ENCODE measurements at regions of chr7 and their contacts with region 1.

Region 1: DNA sequence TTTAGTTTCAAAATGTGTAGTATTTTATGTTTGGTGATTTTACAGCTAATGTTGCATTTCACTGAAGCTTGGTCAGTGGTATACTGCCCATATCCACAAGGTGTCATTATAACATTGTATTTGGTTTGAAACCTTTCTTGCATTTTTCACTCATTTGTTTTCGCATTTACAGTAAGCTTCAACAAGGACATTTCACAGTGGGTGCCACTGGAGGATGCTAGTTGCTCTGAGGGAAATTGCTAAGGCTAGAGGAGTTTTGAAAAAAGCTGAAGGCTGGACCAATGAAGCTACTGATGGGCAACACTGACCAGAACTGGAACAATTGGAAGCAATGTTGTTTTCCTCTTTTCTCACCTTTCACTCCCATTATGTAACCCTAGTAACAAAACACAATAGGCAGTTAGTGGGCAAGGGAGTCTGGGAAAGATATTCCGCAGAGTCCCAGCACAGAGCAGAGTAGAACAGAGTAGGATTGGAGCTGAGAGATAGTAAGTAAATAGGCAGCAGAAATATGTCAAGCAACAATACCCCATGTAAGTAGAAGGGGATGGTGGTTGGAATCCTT is 23.6 kb upstream of the SRI start:
- DNase-seq: peak; percentile 25 to 56
- ATAC-seq: peak; percentile 89 to 90
- H3K4me3 ChIP-seq: no peak overlapping the region
- H3K27ac ChIP-seq: no peak overlapping the region
- H3K4me1 ChIP-seq: no peaks in the 10 kb centered on the region
- CTCF ChIP-seq: peak; percentile 91
- EP300 ChIP-seq: no peak
- POLR2A ChIP-seq: no peak
- RAD21 ChIP-seq: peak; percentile 90 to 92

Region 2: DNA sequence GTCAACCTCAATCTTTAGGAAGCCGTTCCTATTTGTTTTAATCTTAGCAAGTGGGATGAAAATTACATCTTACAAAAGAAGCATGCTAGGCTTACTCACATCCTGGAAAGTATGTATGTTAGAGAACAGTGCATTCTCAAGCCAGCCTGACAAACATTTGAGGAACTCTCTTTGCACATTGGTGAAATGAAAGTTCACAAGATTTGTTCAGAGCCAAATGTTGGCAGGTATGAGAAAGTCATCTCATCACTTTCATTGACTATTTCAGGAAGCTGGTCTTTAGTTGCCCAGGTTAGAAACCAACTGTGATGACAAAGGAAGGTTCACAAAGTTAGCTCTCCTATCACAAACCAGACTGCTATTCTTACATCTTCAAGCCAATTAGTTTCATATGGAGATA is 699.8 kb before region 1 on chr7:
- CTCF ChIA-PET with region 1: no interaction called
- POLR2A ChIA-PET with region 1: no interaction called
- DNase-seq: no peak
- ATAC-seq: no peak
- H3K4me3 ChIP-seq: no peak overlapping the region
- H3K27ac ChIP-seq: no peak overlapping the region
- H3K4me1 ChIP-seq: no peaks in the 10 kb centered on the region
- CTCF ChIP-seq: no peak
- EP300 ChIP-seq: no peak
- POLR2A ChIP-seq: no peak
- RAD21 ChIP-seq: no peak

Region 3: GRCh38 chr7:88184848-88185304 is 58.6 kb before region 1 on chr7:
- CTCF ChIA-PET with region 1: no interaction called
- POLR2A ChIA-PET with region 1: no interaction called
- DNase-seq: no peak
- ATAC-seq: no peak
- H3K4me3 ChIP-seq: no peak overlapping the region
- H3K27ac ChIP-seq: no peak overlapping the region
- H3K4me1 ChIP-seq: no peaks in the 10 kb centered on the region
- CTCF ChIP-seq: no peak
- EP300 ChIP-seq: no peak
- POLR2A ChIP-seq: no peak
- RAD21 ChIP-seq: no peak

Region 4: DNA sequence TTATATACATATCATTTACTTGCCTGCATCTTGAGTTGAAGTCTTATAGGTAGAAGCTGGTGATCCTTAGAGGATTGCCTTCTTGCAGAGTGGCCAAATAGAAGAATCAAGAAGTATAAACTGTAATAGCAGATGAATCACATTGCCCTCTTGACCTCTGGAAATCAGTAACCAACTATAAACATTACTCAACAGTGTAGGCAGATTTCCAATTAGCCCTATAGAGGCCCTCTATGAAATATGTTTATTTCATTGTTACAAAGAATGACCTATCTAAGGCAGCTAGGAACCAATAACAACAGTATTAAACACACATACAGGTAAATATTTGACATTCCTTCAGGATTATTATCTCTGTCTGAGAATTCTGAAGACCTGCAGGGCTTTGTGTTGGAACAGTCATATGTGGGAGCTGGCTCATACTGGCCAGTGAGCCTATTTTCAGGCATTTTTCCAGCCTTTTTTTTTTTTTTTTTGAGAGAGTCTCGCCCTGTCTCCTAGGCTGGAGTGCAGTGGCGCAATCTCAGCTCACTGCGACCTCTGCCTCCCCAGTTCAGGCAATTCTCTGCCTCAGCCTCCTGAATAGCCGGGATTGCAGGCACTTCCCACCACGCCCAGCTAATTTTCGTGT is 16.4 kb before region 1 on chr7:
- CTCF ChIA-PET with region 1: interaction called, 14 read pairs
- POLR2A ChIA-PET with region 1: no interaction called
- DNase-seq: peak; percentile 76 to 94
- ATAC-seq: peak; percentile 95 to 99
- H3K4me3 ChIP-seq: no peak overlapping the region; the same call in 2 of the 3 replicates
- H3K27ac ChIP-seq: peak overlapping the region; percentile 53 to 74; a peak in 5 of 6 replicates
- H3K4me1 ChIP-seq: peaks cover 35% of the 10 kb centered on the region
- CTCF ChIP-seq: no peak
- EP300 ChIP-seq: peak; percentile 83 to 85; a peak in 4 of 5 replicates
- POLR2A ChIP-seq: no peak
- RAD21 ChIP-seq: no peak; a peak in 1 of 5 replicates

Region 5: DNA sequence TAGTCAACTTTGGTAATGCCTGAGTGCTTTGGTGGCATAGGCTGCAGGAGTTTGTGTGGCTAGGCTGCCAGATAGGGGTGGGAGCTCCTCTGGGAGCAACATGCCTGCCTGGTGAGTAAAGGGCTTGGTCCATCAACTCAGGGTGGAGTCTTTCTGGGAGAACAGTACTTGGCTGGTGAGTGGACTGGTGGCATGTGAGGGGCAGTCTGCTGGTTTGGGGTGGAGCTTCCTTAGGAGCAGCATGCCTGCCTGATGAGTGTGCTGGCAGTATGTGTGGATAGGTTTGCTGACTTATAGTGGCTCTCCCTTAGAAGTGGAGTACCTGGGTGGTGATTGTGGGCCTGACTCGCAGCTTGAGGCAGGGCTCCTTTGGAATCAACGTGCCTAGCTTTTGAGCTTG is 11.3 kb after region 1 on chr7:
- CTCF ChIA-PET with region 1: interaction called, 18 read pairs
- POLR2A ChIA-PET with region 1: interaction called, 6 read pairs
- DNase-seq: peak; percentile 13 to 41
- ATAC-seq: peak; percentile 50 to 72; a peak in 5 of 6 replicates
- H3K4me3 ChIP-seq: no peak overlapping the region
- H3K27ac ChIP-seq: no peak overlapping the region
- H3K4me1 ChIP-seq: 0 out of 3 replicates have a peak, but pooled peaks cover 3% of the 10 kb centered on the region
- CTCF ChIP-seq: no peak
- EP300 ChIP-seq: no peak
- POLR2A ChIP-seq: no peak
- RAD21 ChIP-seq: no peak

Region 6: DNA sequence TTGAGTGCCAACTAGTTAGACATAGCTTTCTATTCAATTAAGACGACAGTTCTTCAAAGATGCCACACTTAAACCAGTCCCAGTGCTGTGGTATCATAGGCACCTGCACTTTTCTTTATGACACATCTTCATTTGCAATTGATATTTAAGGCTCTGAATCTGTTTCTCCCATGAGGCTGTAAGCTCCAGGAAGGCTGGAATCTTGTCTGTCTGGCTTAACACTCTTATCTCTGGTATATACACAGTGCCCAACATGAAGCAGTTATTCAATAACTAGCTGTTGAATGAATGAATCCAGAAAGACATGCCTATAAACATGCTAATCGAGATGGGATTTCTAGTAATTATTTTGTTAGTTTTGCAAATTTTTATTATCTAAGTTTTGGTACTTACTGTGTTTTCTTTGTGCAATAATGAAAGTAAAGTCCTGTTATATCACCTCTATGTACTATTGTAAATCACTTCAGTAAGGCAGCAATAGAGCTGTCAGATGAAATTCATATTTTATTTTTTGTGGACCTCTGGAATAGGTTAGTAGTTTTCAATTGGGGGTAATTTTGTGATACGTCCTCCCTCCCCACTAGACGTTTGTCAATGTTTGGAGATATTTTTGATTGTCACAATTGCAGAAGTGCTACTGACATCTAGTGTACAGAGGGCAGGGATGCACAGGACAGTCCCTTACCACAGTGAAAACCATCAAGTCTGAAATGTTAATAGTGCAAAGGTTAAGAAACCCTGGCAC is 114.5 kb after region 1 on chr7:
- CTCF ChIA-PET with region 1: interaction called, 13 read pairs
- POLR2A ChIA-PET with region 1: no interaction called
- DNase-seq: peak in 1 of 2 experiments; percentile 38
- ATAC-seq: peak; percentile 81 to 87
- H3K4me3 ChIP-seq: no peak overlapping the region
- H3K27ac ChIP-seq: no peak overlapping the region
- H3K4me1 ChIP-seq: no peaks in the 10 kb centered on the region
- CTCF ChIP-seq: peak; percentile 48
- EP300 ChIP-seq: no peak
- POLR2A ChIP-seq: no peak
- RAD21 ChIP-seq: peak; percentile 55 to 58